ENCODE measurements at regions of chr12 and their contacts with region 1.

Region 1: DNA sequence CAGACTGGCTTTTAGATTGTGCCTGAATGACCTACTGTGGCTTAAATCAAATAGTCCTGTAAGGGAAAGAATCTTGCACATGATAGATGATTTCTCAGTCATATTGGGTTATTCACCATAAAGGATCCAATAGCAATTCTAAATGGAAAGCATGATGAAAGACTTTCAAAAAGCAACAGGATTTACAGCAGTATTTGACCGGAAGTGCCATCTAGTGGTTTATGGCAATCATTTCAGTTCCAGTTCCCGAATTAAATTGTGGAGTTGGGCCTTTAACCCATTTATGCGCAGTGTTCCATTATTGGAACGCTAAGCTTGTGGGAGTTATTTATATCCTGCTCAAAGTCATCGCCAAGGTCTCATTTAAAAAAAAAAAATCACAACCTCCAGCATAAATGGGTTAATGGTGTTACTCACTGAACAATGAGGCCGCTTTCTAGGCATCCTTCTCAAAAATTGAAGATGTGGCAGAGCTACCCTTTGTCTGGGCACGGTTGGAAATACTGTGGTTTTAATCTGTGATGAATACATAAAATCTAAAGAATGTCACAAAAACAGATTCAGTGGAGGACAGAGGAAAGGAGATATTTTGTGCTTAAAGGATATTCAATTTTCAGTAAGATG is 60.8 kb upstream of the REP15 start:
- H3K4me3 Mint-ChIP-seq: no peak overlapping the region
- H3K27ac Mint-ChIP-seq: no peak overlapping the region
- H3K4me1 Mint-ChIP-seq: peaks cover 17% of the 10 kb centered on the region
- H3K27me3 Mint-ChIP-seq: no peaks in the 10 kb centered on the region

Region 2: DNA sequence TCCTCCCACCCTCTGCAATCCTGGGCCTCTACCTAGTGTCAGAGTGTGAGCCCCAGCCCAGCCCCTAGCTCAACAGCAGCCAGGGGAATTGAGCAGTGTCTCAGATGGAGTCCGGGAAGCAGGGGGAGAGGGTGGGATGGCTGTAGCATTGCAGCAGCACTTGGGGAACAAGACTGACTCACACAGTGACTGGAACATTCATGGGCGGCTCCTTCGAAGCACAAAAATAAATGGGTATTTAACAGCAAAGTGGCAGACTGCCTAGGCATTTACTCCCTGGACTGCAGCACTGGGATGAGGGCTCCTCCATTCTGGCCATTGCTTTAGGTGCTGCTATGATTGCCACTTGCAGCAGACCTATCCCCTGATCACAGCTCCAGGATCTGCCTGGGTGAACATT is 437.4 kb before region 1 on chr12:
- intact Hi-C with region 1: no loop called
- H3K4me3 Mint-ChIP-seq: no peak overlapping the region
- H3K27ac Mint-ChIP-seq: no peak overlapping the region
- H3K4me1 Mint-ChIP-seq: peaks cover 7% of the 10 kb centered on the region
- H3K27me3 Mint-ChIP-seq: no peaks in the 10 kb centered on the region

Region 3: GRCh38 chr12:27424631-27425230 is 210.7 kb before region 1 on chr12:
- intact Hi-C with region 1: loop called (anchors 1 kb)
- H3K4me3 Mint-ChIP-seq: no peak overlapping the region
- H3K27ac Mint-ChIP-seq: no peak overlapping the region
- H3K4me1 Mint-ChIP-seq: peaks cover 3% of the 10 kb centered on the region
- H3K27me3 Mint-ChIP-seq: no peaks in the 10 kb centered on the region

Region 4: GRCh38 chr12:27434673-27435565 is 200.5 kb before region 1 on chr12:
- intact Hi-C with region 1: loop called (anchors 2 kb)
- H3K4me3 Mint-ChIP-seq: no peak overlapping the region
- H3K27ac Mint-ChIP-seq: peak overlapping the region; percentile 33
- H3K4me1 Mint-ChIP-seq: peaks cover 54% of the 10 kb centered on the region
- H3K27me3 Mint-ChIP-seq: no peaks in the 10 kb centered on the region

Region 5: DNA sequence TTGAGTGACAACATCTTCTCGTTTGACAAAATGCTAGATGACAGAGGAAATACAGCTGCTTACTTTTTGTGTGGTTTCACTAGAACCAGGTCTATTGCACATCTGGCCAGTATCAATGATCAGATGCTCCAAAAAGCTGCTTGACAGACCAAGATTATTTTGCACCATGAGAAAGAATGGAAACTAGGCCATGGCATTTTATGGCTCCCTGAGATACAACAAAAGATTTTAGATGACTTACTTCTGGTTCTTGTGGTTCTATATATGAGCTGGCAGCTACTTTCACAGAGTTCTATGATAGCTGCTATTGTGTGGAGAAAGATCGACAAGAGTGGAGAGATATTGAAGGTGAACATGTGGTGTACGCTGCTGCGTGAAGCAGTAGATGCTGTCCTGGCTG is 137.3 kb before region 1 on chr12:
- intact Hi-C with region 1: no loop called
- H3K4me3 Mint-ChIP-seq: no peak overlapping the region
- H3K27ac Mint-ChIP-seq: no peak overlapping the region
- H3K4me1 Mint-ChIP-seq: no peaks in the 10 kb centered on the region
- H3K27me3 Mint-ChIP-seq: no peaks in the 10 kb centered on the region

Region 6: GRCh38 chr12:27619308-27619707 is 16.2 kb before region 1 on chr12:
- intact Hi-C with region 1: no loop called
- H3K4me3 Mint-ChIP-seq: no peak overlapping the region
- H3K27ac Mint-ChIP-seq: no peak overlapping the region
- H3K4me1 Mint-ChIP-seq: peaks cover 34% of the 10 kb centered on the region
- H3K27me3 Mint-ChIP-seq: no peaks in the 10 kb centered on the region

Measured in dendritic cell treated with granulocyte-macrophage colony-stimulating factor and Interleukin-4, amounts not matched to agents 40 ng/mL and 50 ng/mL, for 4 days (primary cell).